ENCODE measurements at regions of chr9 and their contacts with region 1.

Region 1: GRCh38 chr9:133184962-133185361 is 21.2 kb upstream of the GBGT1 start:
- DNase-seq: no peak
- ATAC-seq: peak; percentile 79

Region 2: GRCh38 chr9:132729235-132729890 is 455.6 kb before region 1 on chr9:
- intact Hi-C with region 1: no loop called
- DNase-seq: no peak
- ATAC-seq: peak; percentile 60

Region 3: DNA sequence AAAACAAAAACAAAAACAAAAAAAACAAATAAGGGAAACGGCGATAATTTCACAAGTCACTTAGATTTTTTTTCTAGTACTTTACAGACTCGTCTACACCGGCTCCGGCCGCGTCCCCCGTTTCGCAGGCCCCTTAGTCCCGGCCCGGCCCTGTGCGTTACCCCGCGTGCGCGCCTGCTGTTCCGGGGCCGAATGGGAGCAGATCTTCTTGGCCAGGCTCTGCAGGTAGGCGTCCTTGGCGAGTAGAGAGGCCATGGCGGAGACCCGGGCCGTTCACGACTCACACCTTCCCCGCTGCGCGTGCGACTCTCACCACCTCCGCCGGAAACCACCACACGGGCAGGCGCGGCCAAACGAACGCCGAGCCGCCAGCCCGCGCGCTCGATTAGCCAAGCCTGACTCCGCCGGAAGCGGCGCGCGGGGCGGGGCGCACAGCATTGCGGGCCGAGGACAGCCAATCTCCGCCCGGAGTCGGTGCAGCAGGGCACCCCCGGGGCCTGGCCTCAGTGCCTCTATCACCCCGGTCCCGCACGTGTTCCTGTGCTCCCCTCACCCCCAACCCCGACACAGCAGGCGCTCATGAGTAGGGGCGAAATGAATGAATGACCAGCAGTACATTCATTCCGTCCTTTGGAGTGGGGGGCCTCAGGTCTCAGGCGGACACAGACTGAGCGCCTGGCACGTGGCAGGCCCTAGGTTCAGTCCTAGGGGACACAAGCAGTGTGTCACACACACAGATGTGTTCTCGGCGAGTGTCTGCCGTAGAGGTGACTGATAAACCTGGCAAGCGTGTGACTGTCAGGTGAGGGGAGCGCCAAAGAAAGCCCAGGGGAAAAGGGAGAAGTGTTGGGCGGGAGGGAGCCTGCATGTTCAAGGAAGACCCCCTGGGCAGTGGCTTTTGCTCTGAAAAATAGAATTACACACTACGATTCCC is 151.2 kb after region 1 on chr9 and contains the start of gene SURF6:
- intact Hi-C with region 1: loop called in 1 of 2 experiments (anchors 10 kb)
- DNase-seq: peak; percentile 91 to 94
- ATAC-seq: peak; percentile 81
- total RNA-seq, gene SURF6: 24.1 to 27.8 TPM

Region 4: GRCh38 chr9:133356391-133357091 is 171.6 kb after region 1 on chr9 and contains the starts of genes SURF1 and SURF2:
- intact Hi-C with region 1: no loop called
- DNase-seq: peak; percentile 85 to 96
- ATAC-seq: peak; percentile 90
- total RNA-seq, gene SURF1: 42.0 to 48.2 TPM
- total RNA-seq, gene SURF2: 9.5 to 10.9 TPM

Region 5: DNA sequence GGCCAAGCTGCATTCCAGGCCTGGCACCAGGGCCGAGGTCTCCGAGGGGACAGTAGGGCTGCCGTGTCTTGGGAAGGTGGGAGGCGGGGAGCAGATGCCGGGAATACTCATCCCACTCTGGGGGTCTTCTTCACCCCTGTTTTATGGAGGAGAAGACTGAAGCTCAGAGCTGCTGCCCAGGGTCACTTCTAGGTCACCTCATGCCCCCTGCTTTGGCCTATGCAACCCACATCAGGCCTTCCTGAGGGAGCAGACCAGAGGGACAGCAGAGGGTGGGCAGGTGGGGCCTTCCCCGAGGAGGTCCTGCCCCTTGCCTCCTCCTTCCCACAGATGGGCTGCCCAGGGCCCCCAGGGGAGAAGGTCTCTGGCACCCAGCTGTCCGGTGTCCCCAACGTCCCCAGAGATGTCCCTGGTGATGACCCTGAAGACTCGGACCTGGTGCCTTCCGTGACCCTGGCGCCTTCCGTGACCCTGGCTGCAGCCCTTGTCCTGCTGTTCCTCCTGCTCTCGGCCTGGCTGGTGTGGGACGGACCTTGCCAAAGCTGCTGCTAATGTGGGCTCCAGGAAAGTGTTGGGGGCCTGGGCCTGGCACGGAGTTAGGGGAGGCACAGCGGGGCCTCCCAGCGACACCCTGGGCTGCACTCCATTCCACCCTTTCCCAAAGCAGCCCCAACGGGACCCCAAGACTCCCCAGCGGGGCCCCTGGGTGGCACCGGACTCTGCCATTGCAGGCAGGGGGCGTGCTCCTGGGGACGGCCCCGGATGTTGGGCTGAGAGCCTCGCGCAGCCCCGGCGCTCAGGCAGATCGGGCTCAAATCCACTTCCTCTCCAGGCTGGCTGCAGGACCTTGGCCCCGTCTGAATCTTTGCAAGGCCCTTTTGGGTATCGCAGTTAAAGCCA is 300.6 kb after region 1 on chr9:
- intact Hi-C with region 1: loop called in 1 of 2 experiments (anchors 5 kb)
- DNase-seq: no peak
- ATAC-seq: peak; percentile 37

Measured in left colon (tissue), 2 donors.